ENCODE measurements at regions of chr4 and their contacts with region 1.

Region 1: DNA sequence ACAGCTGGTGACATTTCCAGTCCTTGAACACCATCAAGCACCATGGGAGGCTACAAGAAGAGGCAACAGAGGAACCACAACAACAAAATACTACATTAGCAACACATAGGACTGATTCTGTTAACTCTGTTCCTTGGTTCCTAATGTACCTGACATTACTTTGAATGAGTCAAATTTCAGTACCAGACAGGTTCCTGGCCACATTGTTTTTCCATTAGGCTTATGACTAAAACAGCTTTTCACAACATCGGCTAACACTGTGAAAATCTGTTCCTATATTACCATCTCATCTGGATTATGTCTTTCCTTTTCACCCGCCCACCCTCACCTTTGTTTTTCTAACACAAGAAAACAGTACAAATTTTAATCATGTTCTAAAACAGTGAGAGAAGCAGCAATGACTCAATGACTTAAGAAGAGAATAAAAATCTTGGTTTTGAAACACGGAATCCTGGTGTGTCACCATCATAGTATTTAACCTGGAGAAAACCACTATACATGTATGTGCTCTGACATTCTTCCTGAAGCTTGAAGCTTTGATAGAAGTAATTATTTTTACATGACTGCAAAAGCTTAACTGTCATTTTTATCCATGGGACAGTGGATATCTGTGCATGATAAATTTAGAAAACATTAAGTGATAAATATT is 143.9 kb downstream of the SCFD2 start:
- DNase-seq: no peak
- H3K4me3 ChIP-seq: no peak overlapping the region
- H3K27ac ChIP-seq: no peak overlapping the region
- H3K4me1 ChIP-seq: no peaks in the 10 kb centered on the region
- H3K27me3 ChIP-seq: no peaks in the 10 kb centered on the region
- CTCF ChIP-seq: no peak

Region 2: GRCh38 chr4:53714236-53715140 is 492.5 kb after region 1 on chr4:
- CTCF ChIA-PET with region 1: no interaction called
- POLR2A ChIA-PET with region 1: no interaction called
- intact Hi-C with region 1: loop called (anchors 10 kb)
- DNase-seq: no peak
- H3K4me3 ChIP-seq: no peak overlapping the region
- H3K27ac ChIP-seq: no peak overlapping the region
- H3K4me1 ChIP-seq: no peaks in the 10 kb centered on the region
- H3K27me3 ChIP-seq: no peaks in the 10 kb centered on the region
- CTCF ChIP-seq: no peak